MCF 10A (cell line): ENCODE measurements at regions of chr5 and their contacts with region 1.

Region 1: DNA sequence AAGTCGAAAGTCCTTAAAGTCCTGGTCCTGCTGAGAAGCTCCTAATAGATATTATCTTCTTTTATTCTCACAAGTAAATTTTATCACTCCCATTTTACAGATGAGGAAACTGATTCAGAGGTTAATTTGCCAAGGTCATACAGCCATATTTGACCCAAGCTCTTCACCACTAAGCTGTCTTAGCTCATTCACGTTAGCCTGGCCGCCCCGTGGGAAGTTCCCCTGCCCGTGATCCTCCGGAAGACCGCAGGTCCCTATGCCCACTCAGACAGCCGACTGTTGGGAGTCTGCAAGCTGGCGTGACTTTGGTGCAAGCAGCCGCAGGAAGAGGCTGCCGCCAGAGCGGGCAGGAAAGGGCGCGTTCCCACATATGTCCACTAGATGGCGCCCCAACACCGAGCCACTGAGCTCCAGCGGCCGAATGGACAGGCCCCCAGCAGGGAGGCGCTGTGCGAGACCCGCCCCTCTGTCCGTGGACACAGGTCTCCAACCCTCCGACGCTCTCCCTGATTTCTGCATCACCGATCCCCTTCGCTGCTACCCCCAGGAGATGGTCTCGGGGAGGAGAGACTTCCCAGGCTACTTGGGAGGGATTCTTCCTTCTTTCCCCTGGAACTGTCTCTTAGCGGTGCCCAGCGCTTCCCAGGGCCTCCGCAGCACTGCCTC is 10.0 kb upstream of the ARAP3 start:
- DNase-seq: peak; percentile 87
- H3K4me3 Mint-ChIP-seq: peak overlapping the region; percentile 62
- H3K27ac Mint-ChIP-seq: peak overlapping the region; percentile 43
- H3K4me1 Mint-ChIP-seq: peaks cover 8% of the 10 kb centered on the region
- H3K27me3 Mint-ChIP-seq: peaks cover 35% of the 10 kb centered on the region
- CTCF ChIP-seq: peak; percentile 99

Region 2: DNA sequence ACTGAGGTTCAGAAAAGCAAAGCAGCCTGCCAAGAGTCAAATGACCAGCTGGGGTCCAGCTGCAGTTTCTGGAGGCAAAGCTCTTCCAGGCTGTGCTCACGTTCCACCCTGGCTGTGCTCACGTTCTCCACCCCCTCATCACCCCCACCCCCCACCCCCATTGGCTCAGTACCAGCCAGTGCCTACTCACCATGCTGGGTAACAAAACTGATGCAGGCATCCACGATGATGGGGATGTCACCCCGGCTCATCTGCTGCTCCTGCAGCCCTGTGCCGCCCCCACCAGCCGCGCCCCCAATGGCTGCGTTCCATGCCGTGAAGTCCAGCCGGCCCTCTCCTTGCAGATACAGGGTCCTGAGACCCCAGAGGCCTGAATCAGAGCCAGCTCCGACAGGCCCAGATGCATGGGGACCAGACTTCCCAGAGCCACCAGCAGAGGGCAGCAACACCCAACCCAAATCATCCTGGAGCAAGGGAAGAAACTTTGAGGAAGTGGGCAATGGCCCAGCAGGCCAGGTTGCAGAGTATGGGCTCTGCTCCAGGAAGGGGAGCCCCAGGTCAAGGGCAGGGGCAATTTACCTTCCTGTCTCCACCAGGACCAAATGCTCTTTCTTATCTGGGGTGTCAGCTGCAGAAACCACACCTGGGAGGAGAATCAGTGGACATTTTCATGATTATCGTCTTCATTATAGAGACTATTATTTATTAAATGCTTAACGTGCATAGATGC is 27.1 kb before region 1 on chr5:
- CTCF ChIA-PET with region 1: interaction called, 123 read pairs
- POLR2A ChIA-PET with region 1: interaction called, 3 read pairs
- intact Hi-C with region 1: loop called (anchors 1 kb)
- DNase-seq: peak; percentile 83
- H3K4me3 Mint-ChIP-seq: no peak overlapping the region
- H3K27ac Mint-ChIP-seq: no peak overlapping the region
- H3K4me1 Mint-ChIP-seq: peaks cover 4% of the 10 kb centered on the region
- H3K27me3 Mint-ChIP-seq: no peaks in the 10 kb centered on the region
- CTCF ChIP-seq: peak; percentile 94

Region 3: DNA sequence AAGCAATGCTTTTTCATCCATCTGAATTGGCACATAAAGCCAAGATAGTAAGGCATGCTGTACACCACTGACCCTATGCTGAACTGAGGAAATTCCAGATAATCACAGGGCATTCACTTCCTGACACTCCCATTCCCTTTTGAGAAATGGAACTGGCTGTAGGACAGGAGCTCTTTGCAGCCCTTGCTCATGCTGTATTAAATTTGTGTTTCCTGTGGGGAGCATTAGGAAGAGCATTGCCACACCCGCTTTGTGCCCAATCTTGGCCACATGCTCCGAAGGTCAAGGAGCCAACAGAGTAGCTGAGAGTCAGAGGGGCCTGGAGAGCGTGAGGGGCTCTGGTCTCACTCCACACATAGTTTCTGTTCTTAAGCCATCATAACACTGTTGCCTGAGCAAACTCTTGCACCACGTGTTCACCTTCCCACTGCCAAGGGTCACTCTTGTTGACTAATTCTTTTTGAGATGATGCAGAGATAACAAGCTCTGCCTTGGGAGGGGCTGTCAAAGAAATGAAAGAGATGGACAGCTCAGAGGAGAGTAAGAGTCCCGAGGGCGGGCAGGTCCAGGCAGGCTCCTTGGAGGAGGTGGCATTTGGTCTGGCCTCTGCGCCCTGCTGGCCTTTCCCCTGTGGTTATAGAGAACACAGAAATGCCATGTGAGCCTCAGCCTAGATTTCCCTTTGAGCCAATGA is 21.8 kb after region 1 on chr5:
- CTCF ChIA-PET with region 1: interaction called, 11 read pairs
- POLR2A ChIA-PET with region 1: interaction called, 7 read pairs
- intact Hi-C with region 1: no loop called
- DNase-seq: peak; percentile 96
- H3K4me3 Mint-ChIP-seq: peak overlapping the region; percentile 5
- H3K27ac Mint-ChIP-seq: peak overlapping the region; percentile 73
- H3K4me1 Mint-ChIP-seq: peaks cover 37% of the 10 kb centered on the region
- H3K27me3 Mint-ChIP-seq: no peaks in the 10 kb centered on the region
- CTCF ChIP-seq: no peak

Region 4: DNA sequence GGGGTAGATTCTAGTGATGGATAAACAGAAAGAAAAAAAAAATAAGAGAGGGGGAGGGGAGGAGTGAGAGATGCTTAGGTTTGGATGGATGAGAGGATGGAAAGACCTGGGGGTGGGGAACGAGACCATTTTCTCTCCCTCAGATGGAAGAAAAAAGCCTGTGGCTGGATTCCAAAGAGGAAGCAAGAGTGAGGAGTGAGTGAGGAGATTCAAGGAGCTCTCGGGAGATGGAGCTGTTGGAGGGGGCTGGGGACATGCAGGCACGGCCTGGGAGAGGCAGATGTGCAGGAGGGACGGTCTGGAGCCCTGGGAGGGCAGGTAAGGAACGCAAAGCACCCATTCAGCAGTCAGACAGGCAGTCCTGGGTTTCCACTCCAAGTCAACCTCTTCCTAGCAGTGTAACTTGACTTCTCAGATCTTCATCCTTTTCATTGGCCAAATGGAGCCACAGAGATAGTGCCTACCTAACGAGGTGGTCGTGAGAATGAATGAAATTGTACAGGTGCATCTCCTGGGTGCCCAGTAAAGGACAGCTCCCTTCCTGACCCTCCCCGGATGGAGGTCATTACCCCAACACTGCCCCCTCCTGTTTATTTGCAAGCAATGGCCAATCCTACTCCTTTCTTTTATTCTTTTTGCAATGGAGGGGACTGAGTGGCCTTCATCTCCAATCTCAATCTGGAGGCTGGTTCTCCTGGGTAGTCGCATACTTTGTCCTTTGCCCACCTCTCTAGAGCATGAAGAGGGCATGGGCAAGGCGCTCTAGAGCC is 134.0 kb after region 1 on chr5:
- CTCF ChIA-PET with region 1: interaction called, 10 read pairs
- POLR2A ChIA-PET with region 1: no interaction called
- intact Hi-C with region 1: no loop called
- DNase-seq: peak; percentile 56
- H3K4me3 Mint-ChIP-seq: no peak overlapping the region
- H3K27ac Mint-ChIP-seq: no peak overlapping the region
- H3K4me1 Mint-ChIP-seq: peaks cover 13% of the 10 kb centered on the region
- H3K27me3 Mint-ChIP-seq: no peaks in the 10 kb centered on the region
- CTCF ChIP-seq: peak; percentile 32

Region 5: GRCh38 chr5:141940695-141941271 is 248.8 kb after region 1 on chr5:
- CTCF ChIA-PET with region 1: interaction called, 17 read pairs
- POLR2A ChIA-PET with region 1: interaction called, 3 read pairs
- intact Hi-C with region 1: no loop called
- DNase-seq: no peak
- H3K4me3 Mint-ChIP-seq: no peak overlapping the region
- H3K27ac Mint-ChIP-seq: peak overlapping the region; percentile 28
- H3K4me1 Mint-ChIP-seq: peaks cover 9% of the 10 kb centered on the region
- H3K27me3 Mint-ChIP-seq: no peaks in the 10 kb centered on the region
- CTCF ChIP-seq: no peak